Activated T-helper 2 cell treated with anti-CD3 and anti-CD28 coated beads, Interferon-gamma antibody, Interleukin-2, Interleukin-4, amounts not matched to agents 10 μg/mL and 5 μg/mL and 100 μg/mL, durations not matched to agents 14 hours and 24 hours and 36 hours (primary cell): ENCODE measurements at regions of chr18 and their contacts with region 1.

Region 1: GRCh38 chr18:56709463-56709862 is 58.3 kb downstream of the WDR7 start:
- DNase-seq: peak; percentile 41
- H3K4me3 Mint-ChIP-seq: no peak overlapping the region
- H3K27ac Mint-ChIP-seq: no peak overlapping the region
- H3K4me1 Mint-ChIP-seq: peaks cover 18% of the 10 kb centered on the region
- H3K27me3 Mint-ChIP-seq: no peaks in the 10 kb centered on the region

Region 2: DNA sequence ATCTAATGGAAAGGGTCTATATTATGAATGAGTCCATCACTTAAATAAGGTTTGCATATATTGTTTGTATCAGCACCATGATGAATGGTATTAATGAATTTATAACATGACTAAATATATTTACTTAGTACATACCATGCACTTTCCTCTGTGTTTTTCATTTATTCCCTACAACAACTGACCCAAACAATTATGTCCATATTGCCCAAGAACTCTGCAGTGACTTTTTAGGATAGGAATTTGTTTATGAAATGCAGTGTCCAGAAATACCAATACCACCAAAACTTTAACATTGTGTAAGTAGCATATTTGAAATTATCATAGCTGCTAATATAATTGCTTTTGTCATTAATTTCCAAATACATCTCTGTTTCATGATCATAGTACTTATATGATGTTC is 61.4 kb after region 1 on chr18:
- intact Hi-C with region 1: loop called (anchors 10 kb)
- DNase-seq: no peak
- H3K4me3 Mint-ChIP-seq: no peak overlapping the region
- H3K27ac Mint-ChIP-seq: no peak overlapping the region
- H3K4me1 Mint-ChIP-seq: no peaks in the 10 kb centered on the region
- H3K27me3 Mint-ChIP-seq: no peaks in the 10 kb centered on the region

Region 3: DNA sequence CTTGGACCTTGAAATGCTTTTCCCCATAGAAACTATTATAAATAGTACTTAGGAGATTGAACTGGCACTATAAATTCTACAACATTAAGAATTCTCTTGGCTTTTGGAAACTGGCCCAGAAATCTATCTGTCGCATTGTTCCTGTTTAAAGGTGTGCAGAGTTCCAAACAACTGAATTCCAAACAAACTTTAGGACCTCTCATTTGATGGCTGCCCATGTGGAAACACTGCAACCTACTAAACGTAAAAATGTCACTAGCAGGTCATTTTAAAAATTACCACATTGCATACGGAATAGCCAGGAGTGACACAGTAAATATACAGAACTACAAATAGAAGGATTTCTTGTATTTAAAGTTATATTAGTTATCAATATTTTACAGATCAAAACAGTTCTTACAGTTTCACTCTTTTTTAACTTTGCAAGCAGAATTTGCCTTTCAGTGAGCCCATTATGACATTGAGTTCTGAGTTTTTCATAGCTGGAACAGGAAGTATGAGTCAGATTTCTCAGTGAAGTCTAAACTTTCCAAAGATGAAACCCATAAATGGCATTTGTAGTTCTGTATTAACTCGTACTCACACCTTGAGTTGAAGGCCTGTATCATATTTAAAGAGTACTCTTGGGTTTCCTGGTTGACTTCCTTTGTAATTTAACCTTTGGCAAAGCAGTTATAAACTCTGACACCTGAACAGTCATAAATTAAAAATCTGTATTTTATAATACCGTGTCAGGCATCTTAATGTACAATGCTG is 295.1 kb after region 1 on chr18:
- intact Hi-C with region 1: loop called (anchors 10 kb)
- DNase-seq: no peak
- H3K4me3 Mint-ChIP-seq: peak overlapping the region; percentile 23
- H3K27ac Mint-ChIP-seq: peak overlapping the region; percentile 49
- H3K4me1 Mint-ChIP-seq: peaks cover 34% of the 10 kb centered on the region
- H3K27me3 Mint-ChIP-seq: no peaks in the 10 kb centered on the region